Activated CD4-positive, alpha-beta T cell treated with anti-CD3 and anti-CD28 coated beads for 36 hours (primary cell): ENCODE measurements at regions of chr16 and their contacts with region 1.

Region 1: GRCh38 chr16:27253526-27253930 is 15.0 kb downstream of the NSMCE1 start:
- DNase-seq: no peak
- ATAC-seq: peak; percentile 63
- H3K4me3 Mint-ChIP-seq: peak overlapping the region; percentile 41
- H3K27ac Mint-ChIP-seq: peak overlapping the region; percentile 88
- H3K4me1 Mint-ChIP-seq: peaks cover 82% of the 10 kb centered on the region
- H3K27me3 Mint-ChIP-seq: no peaks in the 10 kb centered on the region

Region 2: DNA sequence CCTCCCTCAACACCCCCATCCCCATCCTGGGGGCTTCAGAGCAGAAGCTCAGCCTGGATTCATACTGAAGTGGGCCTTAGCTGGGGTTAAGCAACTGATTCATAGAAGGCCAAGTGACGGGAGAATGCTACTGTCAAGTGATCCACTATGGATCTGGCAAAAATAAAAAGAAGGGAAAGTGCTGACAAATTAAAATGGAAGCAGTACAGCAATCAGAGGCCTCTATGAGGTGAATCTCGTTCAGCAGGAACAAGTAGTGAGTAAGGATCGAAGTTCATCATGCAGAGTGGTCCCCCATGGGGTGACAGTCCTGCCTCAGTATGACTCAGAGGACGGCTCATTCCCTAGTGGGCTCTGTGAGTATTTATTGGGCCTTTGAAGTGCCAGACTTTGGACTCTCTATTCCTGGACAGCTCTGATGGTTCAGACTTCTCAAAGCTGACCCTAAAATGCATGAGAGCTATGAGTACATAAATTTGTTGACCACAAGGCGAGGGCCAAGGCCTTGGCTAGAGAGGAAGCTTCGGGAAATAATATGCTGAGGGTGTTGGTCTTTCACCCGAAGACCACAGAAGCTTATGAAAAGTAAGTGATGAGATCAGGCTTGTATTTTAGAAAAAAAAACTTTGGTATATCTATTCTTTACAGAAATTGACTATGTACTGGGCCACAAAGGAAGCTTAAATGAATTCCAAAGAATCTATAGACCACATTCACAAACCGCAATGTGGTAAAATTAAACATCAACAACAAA is 20.3 kb after region 1 on chr16:
- CTCF ChIA-PET with region 1: interaction called, 3 read pairs
- POLR2A ChIA-PET with region 1: interaction called, 11 read pairs
- intact Hi-C with region 1: loop called (anchors 2 kb)
- DNase-seq: peak; percentile 69
- ATAC-seq: peak; percentile 89
- H3K4me3 Mint-ChIP-seq: peak overlapping the region; percentile 35
- H3K27ac Mint-ChIP-seq: peak overlapping the region; percentile 87
- H3K4me1 Mint-ChIP-seq: peaks cover 70% of the 10 kb centered on the region
- H3K27me3 Mint-ChIP-seq: no peaks in the 10 kb centered on the region

Region 3: GRCh38 chr16:27993587-27993986 is 740.1 kb after region 1 on chr16:
- CTCF ChIA-PET with region 1: no interaction called
- POLR2A ChIA-PET with region 1: no interaction called
- intact Hi-C with region 1: no loop called
- DNase-seq: no peak
- ATAC-seq: no peak
- H3K4me3 Mint-ChIP-seq: no peak overlapping the region
- H3K27ac Mint-ChIP-seq: no peak overlapping the region
- H3K4me1 Mint-ChIP-seq: peaks cover 10% of the 10 kb centered on the region
- H3K27me3 Mint-ChIP-seq: no peaks in the 10 kb centered on the region